Mammary epithelial cell (primary cell): ENCODE measurements at regions of chrX and their contacts with region 1.

Region 1: DNA sequence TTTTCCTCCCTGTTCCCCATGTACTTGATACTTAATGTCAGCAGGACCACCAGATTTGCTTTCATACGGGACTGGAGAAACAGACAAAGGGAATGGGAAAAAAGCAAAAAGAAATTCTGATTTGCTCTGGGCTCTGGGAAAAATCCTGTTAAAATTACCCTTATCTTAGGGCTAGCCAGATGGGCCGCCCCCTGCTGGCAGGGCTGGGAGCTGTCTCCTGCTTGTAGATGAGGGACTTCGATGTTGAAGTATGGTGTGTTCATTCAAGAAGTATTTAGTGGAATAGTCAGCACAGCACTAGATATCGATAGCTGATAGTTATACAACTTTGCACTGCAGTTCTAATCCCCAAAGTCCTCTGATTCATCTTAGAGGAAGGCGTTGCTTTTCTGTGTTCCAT is 45.8 kb downstream of the BCORL1 start:
- DNase-seq: peak; percentile 3
- H3K4me3 ChIP-seq: no peak overlapping the region
- H3K27ac ChIP-seq: no peak overlapping the region
- H3K4me1 ChIP-seq: no peaks in the 10 kb centered on the region
- H3K27me3 ChIP-seq: no peaks in the 10 kb centered on the region
- CTCF ChIP-seq: peak; percentile 51 to 64

Region 2: GRCh38 chrX:129925305-129926092 is 102.7 kb before region 1 on chrX:
- CTCF ChIA-PET with region 1: interaction called, 3 read pairs
- dilution Hi-C with region 1: loop called (anchors 5 kb)
- in situ Hi-C with region 1: no loop called
- intact Hi-C with region 1: loop called (anchors 1 kb)
- DNase-seq: peak; percentile 50
- H3K4me3 ChIP-seq: no peak overlapping the region
- H3K27ac ChIP-seq: no peak overlapping the region
- H3K4me1 ChIP-seq: peaks cover 3% of the 10 kb centered on the region
- H3K27me3 ChIP-seq: no peaks in the 10 kb centered on the region
- CTCF ChIP-seq: peak; percentile 53 to 55